ENCODE measurements at regions of chr10 and their contacts with region 1.

Region 1: DNA sequence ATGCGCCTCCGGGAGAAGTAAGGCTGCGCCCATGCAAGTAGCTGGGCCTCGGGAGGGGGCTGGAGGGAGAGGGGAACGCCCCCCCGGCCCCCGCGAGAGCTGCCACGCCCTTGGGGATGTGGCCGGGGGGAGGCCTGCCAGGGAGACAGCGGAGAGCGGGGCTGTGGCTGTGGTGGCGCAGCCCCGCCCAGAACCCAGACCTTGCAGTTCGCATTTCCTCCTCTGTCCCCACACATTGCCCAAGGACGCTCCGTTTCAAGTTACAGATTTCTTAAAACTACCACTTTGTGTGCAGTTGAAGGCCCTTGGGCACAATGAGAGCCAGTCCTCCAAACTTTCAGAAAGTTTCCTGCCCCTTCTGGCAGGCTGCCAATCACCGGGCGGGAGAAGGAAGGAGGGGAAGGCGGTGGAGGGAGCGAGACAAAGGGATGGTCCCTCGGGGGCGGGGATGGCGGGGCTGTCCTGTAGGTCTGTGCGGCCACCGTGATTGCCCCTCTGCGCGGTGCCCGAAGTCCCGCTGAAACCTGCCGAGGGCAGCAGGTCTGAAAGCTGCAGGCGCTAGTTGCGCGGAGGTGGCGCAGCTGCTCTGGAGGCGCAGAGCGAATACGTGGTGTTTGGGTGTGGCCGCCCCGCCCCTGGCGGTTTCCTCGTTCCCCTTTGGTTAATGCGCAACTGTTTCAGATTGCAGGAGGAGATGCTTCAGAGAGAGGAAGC is 2.1 kb downstream of the VIM start:
- DNase-seq: peak; percentile 74
- CTCF ChIP-seq: no peak

Region 2: DNA sequence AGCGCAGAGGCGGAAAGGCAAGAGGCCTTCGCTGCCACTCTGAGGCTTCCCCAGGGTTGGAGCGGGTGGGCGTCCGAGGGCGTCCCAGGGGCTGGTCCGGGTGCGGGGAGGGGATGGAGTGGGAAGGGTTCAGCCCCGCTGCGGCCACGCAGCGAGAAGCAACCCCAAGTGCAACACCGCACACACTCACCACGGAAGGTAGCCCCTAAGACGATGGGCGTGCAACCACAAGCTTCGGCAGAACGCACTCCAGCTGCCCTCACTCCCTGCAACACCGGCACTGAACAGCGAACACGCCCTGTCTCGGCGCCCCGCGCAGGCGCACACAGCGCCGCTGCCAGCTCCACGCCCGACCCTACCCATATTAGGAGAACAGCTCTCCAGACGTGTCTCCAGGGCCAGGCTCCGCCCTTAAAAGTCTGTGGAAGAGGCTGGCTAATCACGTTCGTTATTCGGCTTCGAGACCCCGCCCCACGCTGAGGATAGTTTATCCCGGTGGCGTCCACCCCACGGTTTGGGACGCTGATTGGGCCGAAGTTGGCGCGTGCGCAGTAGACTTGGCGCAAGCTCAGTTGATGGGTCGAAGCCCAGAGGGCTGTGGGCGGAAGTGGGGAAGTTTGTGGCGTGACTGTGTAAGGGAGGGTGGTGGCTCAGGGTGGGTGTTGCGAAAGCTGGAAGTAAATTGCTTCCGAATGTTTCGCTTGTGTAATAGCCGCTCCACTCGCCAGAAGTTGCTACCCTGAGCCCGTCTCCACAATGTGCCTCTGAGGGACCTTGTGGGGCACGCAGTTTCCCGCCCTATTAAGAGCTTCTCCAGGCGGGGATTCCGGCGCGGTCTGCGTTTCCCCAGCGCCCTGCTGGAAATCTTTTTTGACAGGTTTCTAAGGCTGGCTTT is 412.8 kb before region 1 on chr10 and contains the start of gene RSU1:
- in situ Hi-C with region 1: no loop called
- DNase-seq: peak; percentile 98
- CTCF ChIP-seq: no peak

Region 3: GRCh38 chr10:16952610-16953009 is 277.5 kb before region 1 on chr10:
- in situ Hi-C with region 1: no loop called
- DNase-seq: no peak
- CTCF ChIP-seq: no peak

Region 4: DNA sequence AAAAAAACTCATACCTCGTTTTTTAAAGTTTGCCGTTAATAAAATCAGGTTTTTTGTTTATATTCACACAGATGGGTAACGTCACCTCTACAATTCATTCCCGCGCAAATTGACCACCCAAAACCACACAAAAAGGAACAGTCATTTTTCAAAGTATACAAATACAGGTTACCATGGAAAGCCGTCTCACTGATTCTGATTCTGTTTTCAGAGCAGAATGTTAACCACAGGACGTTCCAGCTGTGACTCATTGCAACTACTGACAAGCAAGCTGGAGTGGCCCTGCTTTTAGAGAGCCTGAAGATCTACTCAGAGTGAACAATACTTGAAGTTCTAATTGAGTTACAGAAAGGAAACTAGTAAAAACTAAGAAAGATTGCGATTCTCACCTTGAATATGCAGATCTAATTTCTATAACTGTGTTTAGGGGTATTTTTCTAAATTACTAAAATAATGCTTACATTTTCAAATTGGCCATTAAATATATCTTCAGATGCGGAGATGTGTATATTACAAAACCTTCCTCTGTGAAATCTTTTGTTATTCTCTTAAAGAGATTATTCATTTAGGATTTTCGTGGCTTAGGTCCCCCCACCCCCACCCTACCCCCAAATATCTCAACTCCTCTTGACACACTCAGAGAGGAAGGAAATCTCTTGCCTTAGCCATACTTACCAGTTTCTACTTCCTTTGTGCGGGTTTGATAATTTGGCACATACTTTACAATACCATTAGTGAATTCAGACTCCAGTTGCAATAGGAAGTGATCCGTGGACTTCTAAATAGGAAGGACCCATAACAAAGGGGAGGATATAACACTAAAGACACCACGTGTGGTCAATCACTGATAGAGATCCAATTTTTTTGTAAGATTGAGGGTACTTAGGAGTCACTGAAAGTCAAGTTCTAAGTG is 206.5 kb before region 1 on chr10:
- in situ Hi-C with region 1: loop called (anchors 10 kb)
- DNase-seq: peak; percentile 55
- CTCF ChIP-seq: no peak

Region 5: GRCh38 chr10:17075533-17076359 is 154.4 kb before region 1 on chr10:
- in situ Hi-C with region 1: no loop called
- DNase-seq: no peak
- CTCF ChIP-seq: no peak

Region 6: DNA sequence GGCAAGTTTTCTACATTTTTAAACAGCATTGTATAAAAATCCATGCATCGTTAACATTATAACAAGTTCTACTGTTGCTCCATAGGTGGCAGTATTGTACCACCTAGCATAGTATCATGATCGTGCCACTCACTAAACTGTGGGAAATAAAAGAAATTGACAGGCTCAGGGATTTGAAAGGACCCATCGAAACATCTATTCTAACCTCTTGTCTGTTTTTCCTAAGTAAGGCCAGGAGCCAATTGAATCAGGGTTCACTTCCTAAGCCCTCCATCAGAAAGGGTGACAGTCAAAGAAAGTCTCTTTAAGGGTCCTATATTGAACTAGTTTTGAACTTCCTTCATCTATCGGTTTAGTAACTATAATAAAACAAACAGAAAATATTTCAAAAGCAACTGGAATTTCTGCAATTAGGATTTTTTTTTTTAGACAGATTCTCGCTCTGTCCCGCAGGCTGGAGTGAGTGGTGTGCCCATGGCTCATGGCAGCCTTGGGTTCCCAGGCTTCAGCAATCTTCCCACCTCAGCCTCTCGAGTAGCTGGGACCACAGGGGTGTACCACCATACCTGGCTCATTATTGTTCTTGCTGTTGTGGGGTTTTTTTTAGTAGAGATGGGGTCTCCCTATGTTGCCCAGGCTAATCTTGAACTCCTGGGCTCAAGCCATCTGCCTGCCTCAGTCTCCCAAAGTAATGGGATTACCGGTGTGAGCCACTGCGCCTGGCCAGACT is 377.6 kb after region 1 on chr10:
- in situ Hi-C with region 1: no loop called
- DNase-seq: peak; percentile 59
- CTCF ChIP-seq: peak; percentile 70